ENCODE measurements at regions of chr2 and their contacts with region 1.

Region 1: DNA sequence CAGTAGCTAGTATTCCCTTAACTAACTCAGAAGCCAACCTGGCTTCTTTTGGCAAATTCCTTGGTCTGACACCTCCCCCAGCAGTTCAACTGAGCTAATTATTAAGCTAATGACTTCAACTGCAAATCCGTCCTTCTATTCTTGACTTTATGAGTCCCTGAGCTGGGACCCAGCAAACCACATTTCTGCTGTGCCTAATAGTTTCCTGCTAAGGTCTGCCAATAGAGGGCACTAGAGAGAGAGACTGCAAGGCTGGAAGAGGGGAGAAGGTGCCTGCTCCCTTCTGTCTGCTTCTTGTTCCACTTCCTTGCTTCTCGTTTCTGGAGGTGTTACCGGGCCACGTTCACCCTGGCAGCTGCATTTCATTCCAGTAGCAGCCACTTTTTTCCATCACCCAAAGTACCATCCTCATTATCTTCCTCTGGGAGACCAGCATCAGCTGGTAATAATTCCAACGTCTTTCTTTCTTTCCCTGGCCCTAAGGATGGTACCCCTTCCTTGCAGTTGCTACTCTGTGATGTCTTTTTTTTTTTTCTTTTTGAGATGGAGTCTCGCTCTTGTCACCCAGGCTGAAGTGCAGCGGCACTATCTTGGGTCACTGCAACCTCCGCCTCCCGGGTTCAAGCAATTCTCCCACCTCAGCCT is 352.0 kb downstream of the TNS1 start:
- DNase-seq: peak; percentile 77
- H3K4me3 Mint-ChIP-seq: no peak overlapping the region
- H3K27ac Mint-ChIP-seq: peak overlapping the region; percentile 3
- H3K4me1 Mint-ChIP-seq: peaks cover 13% of the 10 kb centered on the region
- H3K27me3 Mint-ChIP-seq: no peaks in the 10 kb centered on the region
- CTCF ChIP-seq: peak; percentile 69

Region 2: DNA sequence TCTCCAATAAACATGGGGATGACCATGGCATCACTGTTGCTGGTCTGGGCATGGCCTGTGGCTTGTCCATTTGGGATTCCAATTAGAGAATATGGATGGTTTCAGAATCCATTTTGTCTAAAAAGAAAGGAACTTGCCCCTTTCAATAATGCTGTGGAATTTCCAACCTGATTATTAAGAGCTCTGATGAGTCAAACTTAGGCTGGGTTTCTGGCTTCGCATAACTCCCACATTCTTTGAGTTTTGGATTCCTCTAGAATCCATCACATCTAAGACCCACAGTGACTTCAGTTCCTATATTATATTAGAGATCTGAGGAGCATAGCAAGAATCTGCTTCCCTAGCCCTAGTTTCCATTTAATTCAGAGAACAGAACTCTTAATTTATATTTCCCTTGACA is 179.5 kb before region 1 on chr2:
- CTCF ChIA-PET with region 1: no interaction called
- POLR2A ChIA-PET with region 1: no interaction called
- intact Hi-C with region 1: no loop called
- DNase-seq: no peak
- H3K4me3 Mint-ChIP-seq: no peak overlapping the region
- H3K27ac Mint-ChIP-seq: no peak overlapping the region
- H3K4me1 Mint-ChIP-seq: no peaks in the 10 kb centered on the region
- H3K27me3 Mint-ChIP-seq: peaks cover 7% of the 10 kb centered on the region
- CTCF ChIP-seq: no peak

Region 3: GRCh38 chr2:217617616-217618022 is 33.2 kb before region 1 on chr2:
- CTCF ChIA-PET with region 1: interaction called, 14 read pairs
- POLR2A ChIA-PET with region 1: no interaction called
- intact Hi-C with region 1: no loop called
- DNase-seq: no peak
- H3K4me3 Mint-ChIP-seq: no peak overlapping the region
- H3K27ac Mint-ChIP-seq: no peak overlapping the region
- H3K4me1 Mint-ChIP-seq: no peaks in the 10 kb centered on the region
- H3K27me3 Mint-ChIP-seq: peaks cover 23% of the 10 kb centered on the region
- CTCF ChIP-seq: no peak

Region 4: DNA sequence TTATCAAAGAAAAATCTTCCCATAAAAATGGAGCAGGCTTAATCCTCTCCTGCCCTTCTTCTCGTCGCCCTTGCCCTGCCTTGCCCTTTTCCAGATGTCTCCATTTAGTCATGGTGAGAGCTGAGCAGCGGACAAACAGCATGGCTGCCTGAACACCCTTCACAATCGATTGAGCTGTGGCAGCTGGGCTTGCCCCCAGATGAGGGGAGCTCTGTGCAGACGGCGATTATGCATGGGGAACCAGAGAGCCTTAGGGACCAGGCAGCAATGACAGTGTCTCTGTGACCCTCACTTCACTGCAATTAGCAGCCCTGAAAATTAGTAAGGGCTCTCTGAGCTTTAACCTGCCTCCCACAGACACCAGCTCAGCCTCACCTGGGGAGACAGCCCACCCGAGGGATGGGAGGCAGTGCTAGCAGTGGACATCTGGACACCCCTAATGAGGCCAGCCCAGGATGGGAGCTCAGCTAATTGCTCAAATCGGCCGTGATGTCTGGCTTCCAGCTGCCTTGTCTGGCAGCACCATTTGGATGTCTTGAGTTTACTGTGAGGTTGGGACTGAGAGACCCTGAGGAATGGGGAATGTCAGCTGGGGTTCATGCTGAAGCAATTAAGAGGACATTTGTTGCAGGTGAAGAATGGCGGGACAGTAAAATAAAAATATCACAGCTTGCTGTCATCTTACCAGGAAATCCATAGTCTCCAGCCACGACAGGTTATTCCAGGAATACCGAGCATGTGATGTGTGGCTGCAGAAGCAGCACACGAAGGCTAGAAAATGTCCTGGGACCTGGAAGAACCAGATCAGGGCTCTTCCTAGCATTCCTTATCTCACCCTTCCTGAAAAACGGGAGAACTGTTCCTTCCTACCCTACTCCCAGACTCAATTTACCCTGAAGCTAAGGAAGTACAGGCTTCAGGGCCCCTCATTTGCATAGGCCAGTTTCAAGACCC is 13.6 kb before region 1 on chr2:
- CTCF ChIA-PET with region 1: interaction called, 46 read pairs
- POLR2A ChIA-PET with region 1: no interaction called
- intact Hi-C with region 1: no loop called
- DNase-seq: no peak
- H3K4me3 Mint-ChIP-seq: no peak overlapping the region
- H3K27ac Mint-ChIP-seq: no peak overlapping the region
- H3K4me1 Mint-ChIP-seq: no peaks in the 10 kb centered on the region
- H3K27me3 Mint-ChIP-seq: no peaks in the 10 kb centered on the region
- CTCF ChIP-seq: no peak

Region 5: DNA sequence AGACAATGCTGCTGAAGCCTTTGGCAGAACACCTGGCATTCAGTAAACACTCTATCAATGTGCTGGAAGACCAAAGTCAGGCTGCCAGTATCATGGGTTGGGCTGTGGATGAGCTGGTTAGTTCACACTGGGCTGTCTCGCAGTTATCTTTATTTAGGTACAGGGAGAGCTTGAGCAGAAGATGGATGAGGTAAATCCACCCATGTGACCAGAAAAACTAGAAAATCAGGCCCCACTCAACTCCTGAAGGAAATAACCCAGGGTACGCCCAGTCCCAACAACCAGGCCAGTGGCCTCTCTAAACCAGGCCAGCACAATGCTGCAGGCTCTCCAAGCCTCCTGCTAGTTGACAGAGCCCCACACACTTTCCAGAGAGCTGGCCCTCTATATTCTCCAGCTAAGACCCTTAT is 21.7 kb after region 1 on chr2:
- CTCF ChIA-PET with region 1: interaction called, 23 read pairs
- POLR2A ChIA-PET with region 1: no interaction called
- intact Hi-C with region 1: no loop called
- DNase-seq: no peak
- H3K4me3 Mint-ChIP-seq: no peak overlapping the region
- H3K27ac Mint-ChIP-seq: no peak overlapping the region
- H3K4me1 Mint-ChIP-seq: no peaks in the 10 kb centered on the region
- H3K27me3 Mint-ChIP-seq: peaks cover 13% of the 10 kb centered on the region
- CTCF ChIP-seq: no peak

Region 6: GRCh38 chr2:217707131-217707667 is 56.4 kb after region 1 on chr2:
- CTCF ChIA-PET with region 1: interaction called, 92 read pairs
- POLR2A ChIA-PET with region 1: no interaction called
- intact Hi-C with region 1: no loop called
- DNase-seq: peak; percentile 87
- H3K4me3 Mint-ChIP-seq: no peak overlapping the region
- H3K27ac Mint-ChIP-seq: peak overlapping the region; percentile 57
- H3K4me1 Mint-ChIP-seq: peaks cover 8% of the 10 kb centered on the region
- H3K27me3 Mint-ChIP-seq: no peaks in the 10 kb centered on the region
- CTCF ChIP-seq: no peak